ENCODE measurements at regions of chr4 and their contacts with region 1.

Region 1: DNA sequence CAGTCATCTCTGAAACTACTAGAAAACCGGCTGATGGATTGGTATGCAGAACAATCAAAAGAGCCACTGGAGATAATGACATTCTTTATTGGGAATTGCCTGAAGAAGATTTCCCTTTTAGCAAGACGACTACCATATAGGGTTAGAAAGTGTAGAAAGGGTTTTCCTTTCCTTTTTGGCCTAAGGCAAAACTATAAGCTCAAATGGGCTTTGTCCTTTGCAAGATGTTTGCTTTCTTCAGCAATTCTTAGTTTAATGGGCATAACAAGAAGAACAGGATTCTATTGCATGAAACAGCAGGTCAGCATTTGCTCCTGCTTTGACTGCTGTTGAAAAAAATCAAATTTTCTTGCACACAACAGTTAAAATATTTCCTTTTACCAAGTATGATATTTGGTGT is 214.1 kb upstream of the PCDH10 start:
- DNase-seq: no peak
- H3K4me3 ChIP-seq: no peak overlapping the region
- H3K27ac ChIP-seq: no peak overlapping the region
- H3K4me1 ChIP-seq: no peaks in the 10 kb centered on the region
- H3K27me3 ChIP-seq: no peaks in the 10 kb centered on the region
- CTCF ChIP-seq: no peak

Region 2: GRCh38 chr4:132893787-132894186 is 41.2 kb before region 1 on chr4:
- CTCF ChIA-PET with region 1: no interaction called
- POLR2A ChIA-PET with region 1: interaction called, 10 read pairs
- intact Hi-C with region 1: no loop called
- DNase-seq: no peak
- H3K4me3 ChIP-seq: no peak overlapping the region
- H3K27ac ChIP-seq: no peak overlapping the region
- H3K4me1 ChIP-seq: no peaks in the 10 kb centered on the region
- H3K27me3 ChIP-seq: no peaks in the 10 kb centered on the region
- CTCF ChIP-seq: no peak

Measured in PC-9 (cell line).